ENCODE measurements at regions of chr16 and their contacts with region 1.

Region 1: GRCh38 chr16:1097800-1098199 is 1.8 kb upstream of the C1QTNF8 start:
- DNase-seq: peak; percentile 77 to 85
- ATAC-seq: peak; percentile 81 to 95 (median 92)
- H3K4me3 ChIP-seq: no peak overlapping the region
- H3K27ac ChIP-seq: peak overlapping the region; percentile 53 to 89 (median 86)
- H3K4me1 ChIP-seq: peaks cover 11 to 29% (median 22%) of the 10 kb centered on the region in 9 donors
- H3K27me3 ChIP-seq: peaks cover 0 to 40% (median 21%) of the 10 kb centered on the region in 7 donors
- CTCF ChIP-seq: no peak

Region 2: GRCh38 chr16:813204-813915 is 284.4 kb before region 1 on chr16:
- intact Hi-C with region 1: loop called in 1 of 10 experiments (anchors 2 kb)
- DNase-seq: peak in 1 of 2 donors; percentile 60
- ATAC-seq: peak; percentile 51 to 83 (median 67)
- H3K4me3 ChIP-seq: peak overlapping the region in 7 of 10 donors; percentile 12 to 34 (median 23)
- H3K27ac ChIP-seq: no peak overlapping the region
- H3K4me1 ChIP-seq: peaks cover 0 to 16% (median 5%) of the 10 kb centered on the region in 9 donors
- H3K27me3 ChIP-seq: peaks cover 7 to 69% (median 63%) of the 10 kb centered on the region in 7 donors
- CTCF ChIP-seq: peak; percentile 31 to 75 (median 67)

Region 3: DNA sequence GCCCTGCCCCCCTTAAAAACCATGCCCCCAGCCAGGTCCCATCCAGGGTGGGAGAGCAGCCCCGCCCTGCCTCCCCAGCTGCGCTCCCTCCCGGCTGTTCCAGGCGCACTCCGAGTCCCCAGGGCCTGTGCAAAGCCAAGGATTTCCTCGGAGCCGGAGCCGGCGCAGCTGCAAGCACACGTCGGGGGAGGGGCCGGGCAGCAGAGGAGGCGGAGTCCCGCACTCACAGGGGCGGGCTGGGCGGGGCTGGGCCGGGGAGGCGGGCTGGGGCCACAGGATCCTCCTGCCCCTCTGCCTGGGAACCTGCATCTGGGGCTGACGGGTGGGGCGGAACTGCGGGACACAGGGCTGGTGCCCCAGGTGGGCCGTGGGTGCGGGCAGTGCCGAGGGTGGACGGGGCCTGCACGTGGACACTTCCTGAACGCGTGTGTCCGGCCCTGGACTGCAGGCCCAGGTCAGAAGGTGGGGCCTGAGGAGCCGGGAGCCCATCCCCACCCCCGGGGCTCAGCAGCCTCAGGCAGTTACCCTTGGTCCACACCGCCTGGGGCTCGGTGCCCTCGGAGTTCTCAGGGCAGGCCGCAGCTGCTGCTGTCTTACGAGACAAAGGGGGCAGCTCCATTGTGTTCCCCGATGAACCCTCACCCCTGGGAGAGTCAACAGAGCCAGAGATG is 49.2 kb before region 1 on chr16:
- intact Hi-C with region 1: no loop called
- DNase-seq: peak; percentile 71 to 80
- ATAC-seq: peak; percentile 19 to 83 (median 80)
- H3K4me3 ChIP-seq: no peak overlapping the region
- H3K27ac ChIP-seq: no peak overlapping the region
- H3K4me1 ChIP-seq: peaks cover 3 to 34% (median 10%) of the 10 kb centered on the region in 9 donors
- H3K27me3 ChIP-seq: peaks cover 11 to 75% (median 56%) of the 10 kb centered on the region in 7 donors
- CTCF ChIP-seq: no peak

Region 4: DNA sequence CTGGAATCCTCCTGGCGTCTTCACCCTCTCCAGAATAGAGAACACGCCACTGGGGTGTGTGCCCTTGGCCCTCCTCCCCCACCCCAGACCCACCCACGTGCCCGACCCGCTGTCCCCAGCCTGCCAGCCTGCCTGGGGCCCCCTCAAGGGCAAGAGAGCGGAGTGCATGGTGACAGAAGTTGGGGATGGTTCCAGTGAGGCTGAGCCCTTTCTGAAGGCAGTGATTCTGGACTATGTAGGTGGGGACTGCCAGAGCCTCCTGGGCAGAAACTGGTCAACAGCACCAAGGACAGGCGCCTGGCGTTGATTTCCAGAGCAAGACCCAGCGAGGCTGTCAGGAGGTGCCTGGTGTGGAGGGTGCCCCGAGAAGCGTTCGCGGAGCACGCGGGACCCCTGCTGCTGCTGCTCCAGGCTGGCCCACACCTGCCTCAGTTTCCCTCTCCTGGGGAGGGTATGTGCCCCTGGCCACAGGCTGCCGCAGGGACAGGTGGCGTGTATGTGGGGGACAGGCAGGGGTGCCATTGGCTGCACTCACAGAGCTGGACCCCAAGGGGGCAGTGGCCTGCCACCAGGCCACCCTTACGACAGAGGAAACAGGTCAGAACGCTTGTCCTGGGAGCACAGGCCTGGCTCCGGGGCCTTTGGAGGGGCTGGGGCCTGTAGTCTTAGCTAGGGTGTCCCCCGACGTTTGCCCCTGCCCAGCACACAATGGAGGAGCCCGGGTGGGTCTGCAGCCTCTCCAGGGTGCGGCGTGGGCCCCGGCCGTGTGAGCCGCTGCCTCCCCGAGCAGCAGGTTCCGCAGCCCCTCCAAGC is 24.0 kb before region 1 on chr16:
- intact Hi-C with region 1: loop called in 1 of 10 experiments (anchors 2 kb)
- DNase-seq: peak in 1 of 2 donors; percentile 68
- ATAC-seq: peak; percentile 47 to 73 (median 54)
- H3K4me3 ChIP-seq: peak overlapping the region in 5 of 10 donors; percentile 21 to 45 (median 35)
- H3K27ac ChIP-seq: peak overlapping the region in 6 of 10 donors; percentile 64 to 84 (median 68)
- H3K4me1 ChIP-seq: peaks cover 0 to 7% (median 0%) of the 10 kb centered on the region in 9 donors
- H3K27me3 ChIP-seq: peaks cover 19 to 87% (median 81%) of the 10 kb centered on the region in 7 donors
- CTCF ChIP-seq: peak in 8 of 9 donors; percentile 12 to 46 (median 38)

Measured in heart right ventricle (tissue), 16 donors.